T-cell (primary cell): ENCODE measurements at regions of chr3 and their contacts with region 1.

Region 1: DNA sequence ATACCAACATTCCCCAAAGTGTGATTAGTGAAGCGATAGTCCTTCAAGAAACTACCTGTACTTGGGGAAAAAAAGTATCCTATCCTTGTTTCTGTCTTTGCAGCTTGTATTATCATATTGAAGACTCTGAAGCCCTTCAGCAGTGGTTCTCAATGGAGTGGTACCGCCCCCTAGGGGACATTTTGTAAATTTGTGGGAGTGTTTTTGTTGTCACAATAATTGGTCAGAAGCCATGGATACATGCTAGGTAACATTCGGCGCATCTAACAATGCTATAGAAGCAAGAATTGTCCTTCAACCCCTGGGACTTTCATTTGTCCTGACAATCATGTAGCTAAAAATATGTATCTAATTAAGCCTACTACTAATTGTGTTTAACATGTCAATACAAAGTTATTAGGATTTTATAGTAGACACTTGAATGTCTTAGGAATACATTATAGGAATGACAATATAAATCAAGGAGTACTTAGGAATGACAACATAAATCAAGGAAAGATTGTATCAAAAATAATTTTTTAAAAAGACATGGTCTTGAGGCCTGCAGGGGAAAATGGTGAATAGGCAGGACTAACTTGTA is 53.7 kb downstream of the NMD3 start:
- DNase-seq: peak in 23 of 35 experiments; percentile 2 to 66 (median 17)
- ATAC-seq: no peak
- H3K4me3 ChIP-seq: no peak overlapping the region
- H3K4me3 Mint-ChIP-seq: no peak overlapping the region
- H3K27ac ChIP-seq: no peak overlapping the region
- H3K27ac Mint-ChIP-seq: no peak overlapping the region
- H3K4me1 ChIP-seq: no peaks in the 10 kb centered on the region
- H3K4me1 Mint-ChIP-seq: peaks cover 0 to 2% (median 2%) of the 10 kb centered on the region in 3 donors
- H3K27me3 ChIP-seq: no peaks in the 10 kb centered on the region
- H3K27me3 Mint-ChIP-seq: no peaks in the 10 kb centered on the region

Region 2: DNA sequence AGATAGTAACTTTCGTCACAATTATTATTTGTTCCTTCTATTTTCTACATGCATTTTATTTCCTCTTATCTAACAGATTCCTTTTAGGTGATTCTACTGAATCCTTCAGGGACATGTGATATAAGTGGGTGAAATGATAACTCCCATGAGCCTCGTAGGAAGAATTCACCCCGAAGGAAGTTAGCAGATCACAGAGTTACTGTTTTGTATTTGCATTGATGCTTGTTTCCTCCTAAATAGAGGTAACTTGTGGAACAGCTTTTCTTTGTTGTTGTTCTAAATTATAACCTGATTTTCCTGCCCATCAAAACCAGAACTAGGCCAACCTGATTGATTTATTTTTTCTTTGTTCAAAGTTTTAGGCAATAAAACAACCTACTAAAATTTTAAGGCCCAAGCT is 86.9 kb after region 1 on chr3:
- CTCF ChIA-PET with region 1: no interaction called
- POLR2A ChIA-PET with region 1: no interaction called
- DNase-seq: no peak
- ATAC-seq: no peak
- H3K4me3 ChIP-seq: no peak overlapping the region
- H3K4me3 Mint-ChIP-seq: no peak overlapping the region
- H3K27ac ChIP-seq: no peak overlapping the region
- H3K27ac Mint-ChIP-seq: no peak overlapping the region
- H3K4me1 ChIP-seq: no peaks in the 10 kb centered on the region
- H3K4me1 Mint-ChIP-seq: no peaks in the 10 kb centered on the region
- H3K27me3 ChIP-seq: peaks cover 0 to 2% of the 10 kb centered on the region in 2 experiments
- H3K27me3 Mint-ChIP-seq: peaks cover 4 to 6% of the 10 kb centered on the region in 2 donors

Region 3: DNA sequence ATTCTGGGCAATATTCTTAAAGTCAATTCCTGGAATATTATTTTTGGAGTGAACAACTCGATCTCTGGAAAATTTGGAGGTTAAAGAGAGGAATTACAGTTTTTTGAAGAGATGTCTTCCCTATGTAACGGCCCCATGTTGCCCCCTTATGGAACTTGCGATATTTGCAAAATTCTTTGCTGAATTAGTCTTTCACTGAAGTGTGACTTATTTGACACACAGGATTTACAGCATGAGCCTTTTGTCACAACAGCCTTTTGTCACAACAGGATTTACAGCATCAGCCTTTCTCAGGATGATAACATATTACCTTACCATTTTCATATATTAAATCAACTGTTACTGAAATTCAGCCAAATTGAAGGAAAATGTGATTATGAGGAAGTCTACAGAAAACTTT is 134.3 kb after region 1 on chr3:
- CTCF ChIA-PET with region 1: interaction called, 9 to 12 read pairs
- POLR2A ChIA-PET with region 1: no interaction called
- DNase-seq: peak in 23 of 35 experiments; percentile 3 to 68 (median 23)
- ATAC-seq: peak in 1 of 4 experiments; percentile 52
- H3K4me3 ChIP-seq: no peak overlapping the region
- H3K4me3 Mint-ChIP-seq: no peak overlapping the region
- H3K27ac ChIP-seq: no peak overlapping the region
- H3K27ac Mint-ChIP-seq: no peak overlapping the region
- H3K4me1 ChIP-seq: peaks cover 12 to 13% of the 10 kb centered on the region in 2 experiments
- H3K4me1 Mint-ChIP-seq: peaks cover 29 to 37% (median 31%) of the 10 kb centered on the region in 3 donors
- H3K27me3 ChIP-seq: no peaks in the 10 kb centered on the region
- H3K27me3 Mint-ChIP-seq: peaks cover 3 to 4% of the 10 kb centered on the region in 2 donors

Region 4: GRCh38 chr3:161423911-161424522 is 149.2 kb after region 1 on chr3:
- CTCF ChIA-PET with region 1: interaction called, 6 to 23 read pairs
- POLR2A ChIA-PET with region 1: interaction called in 1 of 2 experiments, 10 read pairs
- DNase-seq: peak in 1 of 35 experiments; percentile 66
- ATAC-seq: no peak
- H3K4me3 ChIP-seq: no peak overlapping the region
- H3K4me3 Mint-ChIP-seq: no peak overlapping the region
- H3K27ac ChIP-seq: no peak overlapping the region
- H3K27ac Mint-ChIP-seq: no peak overlapping the region
- H3K4me1 ChIP-seq: no peaks in the 10 kb centered on the region
- H3K4me1 Mint-ChIP-seq: peaks cover 4 to 8% (median 5%) of the 10 kb centered on the region in 3 donors
- H3K27me3 ChIP-seq: peaks cover 0 to 4% of the 10 kb centered on the region in 2 experiments
- H3K27me3 Mint-ChIP-seq: peaks cover 0 to 3% of the 10 kb centered on the region in 2 donors